Ovary (tissue), 10 donors: ENCODE measurements at regions of chr10 and their contacts with region 1.

Region 1: DNA sequence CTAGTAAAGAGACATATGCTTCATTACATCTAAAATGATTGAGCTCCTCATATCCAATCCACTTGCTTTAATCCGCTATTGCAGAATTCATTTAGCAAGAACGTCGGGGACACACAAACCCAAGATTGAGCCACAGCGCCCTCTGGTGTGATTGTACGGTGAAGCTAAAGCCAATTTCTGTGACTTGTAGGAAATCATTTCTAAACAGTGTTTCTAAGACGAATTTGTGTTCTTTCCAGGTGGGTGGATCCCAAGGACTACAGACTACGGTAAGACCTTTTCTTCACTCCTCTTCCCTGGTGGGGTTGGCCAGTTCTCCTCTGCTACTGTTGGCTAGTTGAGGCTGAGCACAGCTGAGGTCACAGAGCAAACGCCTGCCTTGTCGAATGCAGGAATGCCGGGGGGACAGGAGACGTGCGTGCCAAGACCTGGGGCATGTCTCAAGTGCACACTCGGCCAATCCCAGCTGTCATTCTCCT is 5.2 kb downstream of the DMBT1 start:
- DNase-seq: peak; percentile 73 to 88 (median 86)
- H3K4me3 ChIP-seq: no peak overlapping the region
- H3K27ac ChIP-seq: no peak overlapping the region
- H3K4me1 ChIP-seq: peaks cover 1% of the 10 kb centered on the region
- H3K27me3 ChIP-seq: no peaks in the 10 kb centered on the region
- CTCF ChIP-seq: peak; percentile 59 to 80 (median 78)
- EP300 ChIP-seq: no peak
- POLR2A ChIP-seq: no peak

Region 2: GRCh38 chr10:122298598-122299301 is 267.0 kb before region 1 on chr10:
- intact Hi-C with region 1: loop called in 3 of 4 experiments (anchors 2 to 5 kb)
- DNase-seq: peak; percentile 69 to 87 (median 84)
- H3K4me3 ChIP-seq: peak overlapping the region; percentile 21
- H3K27ac ChIP-seq: no peak overlapping the region
- H3K4me1 ChIP-seq: no peaks in the 10 kb centered on the region
- H3K27me3 ChIP-seq: no peaks in the 10 kb centered on the region
- CTCF ChIP-seq: peak; percentile 69 to 86 (median 85)
- EP300 ChIP-seq: no peak
- POLR2A ChIP-seq: no peak

Region 3: DNA sequence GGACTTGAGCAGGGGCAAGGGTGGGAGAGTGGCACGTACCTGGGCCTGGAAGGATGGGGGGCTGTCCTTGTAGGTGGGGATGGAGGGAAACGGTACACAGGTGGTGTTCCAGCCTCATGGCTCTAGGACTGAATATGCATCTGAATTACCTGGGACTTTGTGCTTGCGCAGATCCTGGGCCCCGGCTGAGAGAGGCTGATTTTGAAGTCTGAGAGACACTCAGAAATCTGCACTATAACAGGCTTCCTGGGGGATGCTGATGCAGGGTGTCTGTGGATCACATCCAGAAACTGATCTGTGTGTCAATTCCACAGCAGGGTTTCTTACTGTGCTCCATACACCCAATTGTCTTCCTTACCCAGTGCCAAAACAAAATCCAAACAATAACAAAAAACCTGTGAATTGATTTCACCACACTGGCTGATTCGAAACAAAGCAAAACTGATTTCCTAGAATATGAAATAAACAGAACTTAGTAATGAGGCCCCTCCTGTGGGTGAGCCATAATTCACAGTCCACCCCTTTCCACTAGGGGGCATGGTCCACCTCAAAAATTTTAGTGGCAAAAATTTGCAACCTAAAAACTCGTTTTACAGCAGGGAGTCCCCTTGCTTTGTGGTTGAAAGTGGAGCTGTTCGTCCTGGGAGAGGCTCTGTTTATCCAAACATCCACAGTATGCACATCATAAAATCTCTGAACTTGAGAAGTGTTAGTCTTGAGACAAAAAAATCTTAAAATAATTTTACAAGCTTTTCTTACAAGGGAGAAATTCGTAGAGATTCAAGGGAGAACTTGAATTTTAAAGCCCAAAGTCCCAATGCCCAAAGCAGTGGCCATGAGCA is 223.3 kb before region 1 on chr10:
- intact Hi-C with region 1: loop called in 2 of 4 experiments (anchors 2 to 5 kb)
- DNase-seq: peak; percentile 39 to 72 (median 53)
- H3K4me3 ChIP-seq: no peak overlapping the region
- H3K27ac ChIP-seq: peak overlapping the region in 1 of 2 donors; percentile 38
- H3K4me1 ChIP-seq: peaks cover 4% of the 10 kb centered on the region
- H3K27me3 ChIP-seq: no peaks in the 10 kb centered on the region
- CTCF ChIP-seq: peak; percentile 43 to 72 (median 62)
- EP300 ChIP-seq: no peak
- POLR2A ChIP-seq: no peak

Region 4: GRCh38 chr10:122441961-122442360 is 123.8 kb before region 1 on chr10:
- intact Hi-C with region 1: loop called in 3 of 4 experiments (anchors 2 to 10 kb)
- DNase-seq: no peak
- H3K4me3 ChIP-seq: no peak overlapping the region
- H3K27ac ChIP-seq: no peak overlapping the region
- H3K4me1 ChIP-seq: no peaks in the 10 kb centered on the region
- H3K27me3 ChIP-seq: no peaks in the 10 kb centered on the region
- CTCF ChIP-seq: no peak
- EP300 ChIP-seq: no peak
- POLR2A ChIP-seq: no peak

Region 5: GRCh38 chr10:122461367-122461728 is 104.4 kb before region 1 on chr10 and contains the start of gene HTRA1:
- intact Hi-C with region 1: loop called in 1 of 4 experiments (anchors 10 kb)
- DNase-seq: peak; percentile 82 to 88 (median 86)
- H3K4me3 ChIP-seq: peak within 1 kb of the TSS; percentile 57
- H3K27ac ChIP-seq: peak within 1 kb of the TSS; percentile 90 to 91
- H3K4me1 ChIP-seq: peaks cover 28% of the 10 kb centered on the region
- H3K27me3 ChIP-seq: no peaks in the 10 kb centered on the region
- CTCF ChIP-seq: no peak
- EP300 ChIP-seq: no peak
- POLR2A ChIP-seq: no peak
- total RNA-seq, gene HTRA1: 194 to 463 (median 337) TPM

Region 6: GRCh38 chr10:122814493-122814892 is 248.7 kb after region 1 on chr10:
- intact Hi-C with region 1: no loop called
- DNase-seq: no peak
- H3K4me3 ChIP-seq: no peak overlapping the region
- H3K27ac ChIP-seq: no peak overlapping the region
- H3K4me1 ChIP-seq: no peaks in the 10 kb centered on the region
- H3K27me3 ChIP-seq: no peaks in the 10 kb centered on the region
- CTCF ChIP-seq: no peak
- EP300 ChIP-seq: no peak
- POLR2A ChIP-seq: no peak